ENCODE measurements at regions of chr17 and their contacts with region 1.

Region 1: DNA sequence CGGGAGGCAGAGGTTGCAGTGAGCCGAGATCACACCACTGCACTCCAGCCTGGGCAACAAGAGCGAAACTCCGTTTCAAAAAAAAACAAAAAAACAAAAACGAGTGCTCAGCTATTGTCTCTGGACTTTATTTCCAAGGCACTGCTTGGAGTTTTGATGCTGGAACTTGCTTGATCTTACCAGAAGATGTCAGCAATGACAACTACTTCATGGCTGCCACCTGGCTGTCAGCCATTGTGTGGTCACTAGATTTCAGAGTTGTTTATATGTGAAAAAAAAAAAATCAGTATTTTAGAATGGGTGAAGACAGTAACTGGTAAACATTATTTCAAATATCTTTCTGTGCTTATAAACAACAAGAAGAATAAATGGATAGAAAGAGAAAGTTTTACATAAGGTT is 26.3 kb upstream of the OR4D1 start:
- DNase-seq: no peak
- ATAC-seq: no peak
- H3K4me3 ChIP-seq: no peak overlapping the region
- H3K27ac ChIP-seq: no peak overlapping the region
- H3K4me1 ChIP-seq: no peaks in the 10 kb centered on the region
- H3K27me3 ChIP-seq: no peaks in the 10 kb centered on the region
- CTCF ChIP-seq: peak; percentile 9 to 39 (median 35); a peak in 4 of 6 replicates
- EP300 ChIP-seq: no peak
- POLR2A ChIP-seq: no peak
- RAD21 ChIP-seq: peak; percentile 39

Region 2: GRCh38 chr17:58402047-58402446 is 280.1 kb after region 1 on chr17:
- CTCF ChIA-PET with region 1: no interaction called
- POLR2A ChIA-PET with region 1: no interaction called
- RAD21 ChIA-PET with region 1: no interaction called
- SMC1A ChIA-PET with region 1: no interaction called
- in situ Hi-C with region 1: no loop called
- intact Hi-C with region 1: no loop called
- DNase-seq: no peak
- ATAC-seq: peak; percentile 39
- H3K4me3 ChIP-seq: no peak overlapping the region
- H3K27ac ChIP-seq: no peak overlapping the region
- H3K4me1 ChIP-seq: no peaks in the 10 kb centered on the region
- H3K27me3 ChIP-seq: no peaks in the 10 kb centered on the region; a peak in 1 of 4 replicates
- CTCF ChIP-seq: no peak
- EP300 ChIP-seq: no peak
- POLR2A ChIP-seq: no peak
- RAD21 ChIP-seq: no peak

Region 3: GRCh38 chr17:58447039-58447975 is 325.4 kb after region 1 on chr17:
- CTCF ChIA-PET with region 1: no interaction called
- POLR2A ChIA-PET with region 1: no interaction called
- RAD21 ChIA-PET with region 1: no interaction called
- SMC1A ChIA-PET with region 1: no interaction called
- in situ Hi-C with region 1: no loop called
- intact Hi-C with region 1: loop called (anchors 1 kb)
- DNase-seq: peak; percentile 53
- ATAC-seq: peak; percentile 99
- H3K4me3 ChIP-seq: no peak overlapping the region
- H3K27ac ChIP-seq: no peak overlapping the region
- H3K4me1 ChIP-seq: no peaks in the 10 kb centered on the region
- H3K27me3 ChIP-seq: no peaks in the 10 kb centered on the region
- CTCF ChIP-seq: peak; percentile 84 to 93 (median 88); a peak in 5 of 6 replicates
- EP300 ChIP-seq: no peak
- POLR2A ChIP-seq: no peak
- RAD21 ChIP-seq: peak; percentile 99